GM12878 (cell line): ENCODE measurements at regions of chr5 and their contacts with region 1.

Region 1: GRCh38 chr5:472656-473553 is 29.9 kb downstream of the EXOC3 start:
- DNase-seq: no peak
- ATAC-seq: peak; percentile 80
- H3K4me3 ChIP-seq: peak overlapping the region; percentile 97
- H3K27ac ChIP-seq: peak overlapping the region; percentile 72
- H3K4me1 ChIP-seq: peaks cover 4% of the 10 kb centered on the region
- H3K27me3 ChIP-seq: no peaks in the 10 kb centered on the region
- CTCF ChIP-seq: no peak
- EP300 ChIP-seq: no peak
- POLR2A ChIP-seq: peak; percentile 93
- RAD21 ChIP-seq: no peak

Region 2: GRCh38 chr5:424301-425110 is 48.4 kb before region 1 on chr5:
- CTCF ChIA-PET with region 1: no interaction called
- POLR2A ChIA-PET with region 1: interaction called, 10 read pairs
- RAD21 ChIA-PET with region 1: no interaction called
- SMC1A ChIA-PET with region 1: no interaction called
- in situ Hi-C with region 1: no loop called
- intact Hi-C with region 1: no loop called
- DNase-seq: peak; percentile 82
- ATAC-seq: peak; percentile 93
- H3K4me3 ChIP-seq: no peak overlapping the region
- H3K27ac ChIP-seq: peak overlapping the region; percentile 99
- H3K4me1 ChIP-seq: peaks cover 22% of the 10 kb centered on the region
- H3K27me3 ChIP-seq: no peaks in the 10 kb centered on the region
- CTCF ChIP-seq: no peak
- EP300 ChIP-seq: peak; percentile 51 to 64; a peak in 2 of 4 replicates
- POLR2A ChIP-seq: peak; percentile 63; the same call in 1 of the 2 replicates
- RAD21 ChIP-seq: no peak

Region 3: DNA sequence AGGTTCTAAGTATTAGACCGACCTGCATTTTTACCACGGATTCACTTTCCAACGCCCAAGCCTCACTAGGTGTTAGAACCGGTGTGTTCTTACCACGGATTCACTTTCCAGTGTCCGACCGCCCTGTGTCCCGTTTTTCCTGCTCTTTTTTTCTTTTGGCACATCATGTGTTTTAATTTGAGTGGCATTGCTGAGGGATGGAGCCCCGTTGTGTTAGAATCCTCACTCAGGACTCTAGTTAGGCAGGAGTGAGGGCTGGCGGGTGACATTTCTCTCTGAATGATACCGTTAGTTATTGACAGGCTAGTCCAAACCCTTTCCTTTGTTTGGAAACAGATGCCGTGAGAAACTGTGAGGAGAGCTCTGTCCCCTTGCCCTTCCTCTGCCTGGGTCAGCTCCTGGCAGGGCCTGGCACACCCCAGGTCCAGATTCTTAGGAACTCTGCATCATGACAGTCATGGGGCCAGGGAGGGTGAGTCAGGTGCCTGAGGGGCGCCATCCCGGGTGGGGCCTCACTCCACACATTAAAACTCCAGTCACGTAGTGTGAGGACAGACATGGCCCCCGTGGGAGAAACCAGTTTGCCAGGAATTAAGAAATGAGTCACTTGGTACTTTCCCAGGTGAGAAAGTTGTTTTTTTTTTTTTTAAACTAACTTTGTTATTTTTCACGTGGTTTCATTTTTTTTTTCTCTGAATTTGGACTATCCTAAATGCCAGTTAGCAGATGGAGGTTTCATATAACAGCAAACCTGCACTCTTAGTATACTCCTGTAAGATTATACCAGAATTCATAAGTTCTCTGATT is 14.2 kb before region 1 on chr5:
- CTCF ChIA-PET with region 1: no interaction called
- POLR2A ChIA-PET with region 1: interaction called, 17 read pairs
- RAD21 ChIA-PET with region 1: interaction called, 4 read pairs
- SMC1A ChIA-PET with region 1: interaction called, 3 read pairs
- in situ Hi-C with region 1: no loop called
- intact Hi-C with region 1: no loop called
- DNase-seq: peak; percentile 56
- ATAC-seq: peak; percentile 92
- H3K4me3 ChIP-seq: no peak overlapping the region
- H3K27ac ChIP-seq: peak overlapping the region; percentile 91
- H3K4me1 ChIP-seq: peaks cover 7% of the 10 kb centered on the region
- H3K27me3 ChIP-seq: no peaks in the 10 kb centered on the region
- CTCF ChIP-seq: no peak
- EP300 ChIP-seq: peak in 1 of 2 experiments; percentile 45; a peak in 1 of 4 replicates
- POLR2A ChIP-seq: no peak
- RAD21 ChIP-seq: no peak

Region 4: DNA sequence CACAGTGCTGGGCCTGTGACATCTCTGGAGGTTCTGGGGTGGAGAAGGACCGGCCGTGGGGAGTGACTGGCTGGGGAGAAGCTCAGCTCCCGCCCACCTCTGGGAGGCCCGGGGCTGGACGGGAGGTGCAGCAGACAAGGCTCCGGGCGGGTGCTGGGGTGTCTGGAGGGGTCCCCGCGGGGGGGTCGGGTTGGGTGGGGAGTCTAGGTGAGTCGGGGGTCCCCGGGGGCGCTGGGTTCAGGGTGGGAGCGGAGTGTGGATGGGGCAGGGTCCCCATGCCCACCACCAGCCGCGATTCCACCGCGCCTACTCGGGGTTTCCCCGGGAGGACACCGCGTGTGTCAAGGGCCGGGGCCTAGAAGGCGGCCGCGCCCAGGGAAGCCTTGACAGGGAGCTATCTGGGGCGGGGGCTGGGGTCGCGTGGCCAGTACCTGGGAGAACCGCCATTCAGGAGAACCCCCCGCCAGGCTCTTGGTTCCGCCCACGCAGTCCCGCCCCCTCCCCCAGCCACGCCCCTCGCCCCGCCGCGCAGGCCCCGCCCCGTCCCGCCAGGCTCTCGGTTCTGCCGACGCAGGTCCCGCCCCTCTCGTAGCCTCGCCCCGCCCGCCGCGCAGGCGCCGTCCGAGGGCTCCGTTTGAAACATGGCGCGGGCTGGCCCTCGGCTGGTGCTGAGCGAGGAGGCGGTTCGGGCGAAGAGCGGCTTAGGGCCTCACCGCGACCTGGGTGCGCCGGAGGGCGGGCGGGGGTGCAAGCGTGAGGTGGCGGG is 139.0 kb after region 1 on chr5 and contains the start of gene CEP72:
- CTCF ChIA-PET with region 1: no interaction called
- POLR2A ChIA-PET with region 1: no interaction called
- RAD21 ChIA-PET with region 1: no interaction called
- SMC1A ChIA-PET with region 1: no interaction called
- in situ Hi-C with region 1: no loop called
- intact Hi-C with region 1: loop called (anchors 10 kb)
- DNase-seq: peak; percentile 40
- ATAC-seq: peak; percentile 95
- H3K4me3 ChIP-seq: peak within 1 kb of the TSS; percentile 83
- H3K27ac ChIP-seq: peak within 1 kb of the TSS; percentile 61
- H3K4me1 ChIP-seq: peaks cover 16% of the 10 kb centered on the region
- H3K27me3 ChIP-seq: no peaks in the 10 kb centered on the region; a peak in 1 of 4 replicates
- CTCF ChIP-seq: no peak
- EP300 ChIP-seq: no peak
- POLR2A ChIP-seq: peak; percentile 89
- RAD21 ChIP-seq: no peak
- polyA plus RNA-seq, gene CEP72: 0.35 to 0.99 TPM